Dorsolateral prefrontal cortex (tissue), 120 donors: ENCODE measurements at regions of chr17 and their contacts with region 1.

Region 1: GRCh38 chr17:32877164-32877764 is 340 bp upstream of the MYO1D start:
- DNase-seq: peak; percentile 61 to 92 (median 84)
- H3K4me3 ChIP-seq: peak overlapping the region in 58 of 59 donors; percentile 51 to 91 (median 82)
- H3K27ac ChIP-seq: peak overlapping the region in 52 of 59 donors; percentile 29 to 97 (median 87)
- H3K27me3 ChIP-seq: no peaks in the 10 kb centered on the region
- CTCF ChIP-seq: peak; percentile 34 to 95 (median 82)

Region 2: GRCh38 chr17:32894245-32894644 is 17.0 kb after region 1 on chr17:
- intact Hi-C with region 1: no loop called
- DNase-seq: no peak
- H3K4me3 ChIP-seq: no peak overlapping the region
- H3K27ac ChIP-seq: no peak overlapping the region
- H3K27me3 ChIP-seq: no peaks in the 10 kb centered on the region
- CTCF ChIP-seq: no peak

Region 3: DNA sequence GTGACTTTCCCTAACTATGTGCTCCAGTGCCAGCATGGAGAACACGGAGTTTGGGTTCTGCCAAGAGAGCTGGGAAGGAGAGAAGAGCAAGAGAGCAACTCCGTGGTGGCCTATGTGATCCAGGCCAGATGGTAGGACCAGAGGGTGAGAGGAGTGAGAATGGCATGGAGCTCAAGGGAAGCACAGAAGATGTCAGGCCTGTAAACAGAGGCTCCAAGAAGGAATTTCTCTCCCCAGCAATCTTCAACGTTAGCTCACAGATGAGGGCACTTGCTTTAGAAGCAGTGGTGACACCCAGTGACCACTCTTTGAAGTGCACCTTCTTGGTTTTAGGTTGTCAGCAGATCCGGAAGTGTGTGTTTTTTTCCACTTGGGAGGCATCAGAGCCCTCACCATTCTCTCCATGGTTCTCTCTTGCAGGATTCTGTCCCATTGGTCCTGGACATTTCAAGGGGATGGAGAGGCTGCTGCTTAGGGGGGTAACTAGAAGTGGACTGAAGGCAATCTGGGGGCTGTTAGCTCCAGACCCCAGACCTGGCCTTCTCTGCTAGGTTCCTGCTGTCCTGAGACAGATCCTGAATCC is 32.6 kb after region 1 on chr17:
- intact Hi-C with region 1: loop called in 1 of 2 experiments (anchors 2 kb)
- DNase-seq: peak in 9 of 10 donors; percentile 48 to 87 (median 67)
- H3K4me3 ChIP-seq: no peak overlapping the region
- H3K27ac ChIP-seq: peak overlapping the region in 44 of 59 donors; percentile 3 to 79 (median 58)
- H3K27me3 ChIP-seq: no peaks in the 10 kb centered on the region
- CTCF ChIP-seq: peak; percentile 43 to 89 (median 80)

Region 4: GRCh38 chr17:32927724-32928585 is 50.7 kb after region 1 on chr17 and contains the start of gene TMEM98:
- intact Hi-C with region 1: loop called in 1 of 2 experiments (anchors 5 kb)
- DNase-seq: peak in 9 of 10 donors; percentile 24 to 84 (median 61)
- H3K4me3 ChIP-seq: peak within 1 kb of the TSS; percentile 43 to 84 (median 71)
- H3K27ac ChIP-seq: peak within 1 kb of the TSS; percentile 23 to 100 (median 96)
- H3K27me3 ChIP-seq: peaks cover 0 to 9% (median 0%) of the 10 kb centered on the region in 45 donors
- CTCF ChIP-seq: peak in 7 of 56 donors; percentile 5 to 24 (median 13)
- total RNA-seq, gene TMEM98: 13.7 to 214 (median 45.5) TPM

Region 5: GRCh38 chr17:33366981-33367383 is 489.7 kb after region 1 on chr17:
- intact Hi-C with region 1: no loop called
- DNase-seq: no peak
- H3K4me3 ChIP-seq: no peak overlapping the region
- H3K27ac ChIP-seq: no peak overlapping the region
- H3K27me3 ChIP-seq: peaks cover 0 to 9% (median 0%) of the 10 kb centered on the region in 45 donors
- CTCF ChIP-seq: no peak